Activated CD4-positive, alpha-beta T cell treated with anti-CD3 and anti-CD28 coated beads for 36 hours (primary cell): ENCODE measurements at regions of chr18 and their contacts with region 1.

Region 1: DNA sequence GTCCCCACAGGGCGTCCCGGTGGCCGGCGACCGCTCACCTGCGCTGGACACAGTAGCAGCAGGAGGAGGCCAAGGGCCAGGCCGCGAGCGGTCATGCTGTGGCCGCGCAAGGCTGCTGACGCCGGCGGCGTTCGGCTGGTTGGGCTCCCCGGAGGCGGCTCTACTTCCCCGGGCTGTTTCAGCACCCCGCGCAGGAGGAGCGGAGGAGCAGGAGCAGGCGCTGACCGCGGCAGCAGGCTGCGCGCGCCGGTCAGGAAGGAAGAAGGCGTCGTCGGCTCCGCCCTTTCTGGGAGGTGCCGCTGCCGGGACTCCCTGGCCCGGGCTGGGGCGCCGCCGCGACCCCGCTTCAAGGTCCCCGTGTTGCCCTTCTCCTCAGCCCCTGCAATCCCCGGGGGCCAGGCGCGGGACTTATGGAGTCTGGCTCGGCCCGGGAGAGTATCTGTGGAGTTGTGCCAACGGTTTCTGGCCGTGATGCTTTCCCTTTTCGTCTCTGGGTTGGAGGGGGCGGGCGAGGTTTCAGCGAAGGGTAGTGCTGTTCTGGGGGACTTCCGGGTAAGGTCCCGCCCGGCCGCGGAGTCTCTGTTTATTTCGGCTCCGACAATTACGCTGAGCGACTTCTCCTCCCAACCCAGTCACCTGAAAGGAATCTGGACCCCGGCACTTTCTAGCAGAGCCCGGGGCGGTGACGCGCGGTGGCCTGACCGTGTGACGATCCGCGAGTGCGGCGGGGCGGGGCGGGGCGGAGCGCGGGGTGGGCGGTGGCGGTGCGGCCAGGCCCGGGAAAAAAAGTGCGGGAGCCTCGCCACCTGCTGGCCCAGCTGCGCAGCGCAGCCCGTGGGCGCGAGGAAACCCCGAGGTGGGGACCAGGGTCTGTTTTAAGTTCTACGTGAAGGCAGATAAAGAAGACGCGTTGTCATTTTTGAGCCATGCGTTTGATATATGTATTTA is at the start of gene NPC1:
- DNase-seq: peak; percentile 95
- ATAC-seq: peak; percentile 95
- H3K4me3 Mint-ChIP-seq: peak within 1 kb of the TSS; percentile 94
- H3K27ac Mint-ChIP-seq: peak within 1 kb of the TSS; percentile 91
- H3K4me1 Mint-ChIP-seq: peaks cover 39% of the 10 kb centered on the region
- H3K27me3 Mint-ChIP-seq: no peaks in the 10 kb centered on the region
- total RNA-seq, gene NPC1: 21.6 to 29.2 TPM

Region 2: DNA sequence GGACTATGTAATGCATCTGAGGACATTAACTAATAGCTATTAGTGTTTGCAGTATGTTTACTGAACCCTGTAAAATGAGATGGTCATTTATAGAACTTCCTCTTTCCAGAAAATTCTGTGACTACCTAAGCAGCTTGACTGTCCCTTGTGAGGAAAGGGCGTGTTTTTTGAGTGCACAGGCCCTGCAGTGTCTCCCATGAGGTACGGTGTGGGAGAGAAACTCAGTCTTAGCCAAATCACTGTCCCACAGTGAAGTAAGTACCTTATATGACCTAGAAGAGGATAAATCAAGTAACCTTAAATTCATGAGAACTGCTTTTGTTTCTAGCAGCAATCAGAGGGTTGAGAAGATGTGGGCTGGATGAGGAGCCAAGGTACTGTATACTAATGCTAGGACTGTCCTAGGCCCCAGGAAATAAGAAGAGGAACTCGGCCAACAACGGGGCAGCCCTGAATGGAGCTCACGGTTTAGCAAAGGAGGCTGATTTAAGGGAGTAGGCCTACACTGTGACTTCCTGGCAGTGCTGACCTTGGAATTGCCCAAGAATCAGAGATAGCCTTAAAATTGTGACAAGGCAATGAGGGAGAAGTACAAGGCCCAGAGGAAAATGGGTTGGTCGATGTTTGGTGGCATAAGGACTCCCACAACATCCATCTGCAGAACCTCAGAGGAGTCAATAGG is 1065.4 kb before region 1 on chr18:
- CTCF ChIA-PET with region 1: no interaction called
- POLR2A ChIA-PET with region 1: no interaction called
- intact Hi-C with region 1: no loop called
- DNase-seq: no peak
- ATAC-seq: no peak
- H3K4me3 Mint-ChIP-seq: no peak overlapping the region
- H3K27ac Mint-ChIP-seq: no peak overlapping the region
- H3K4me1 Mint-ChIP-seq: no peaks in the 10 kb centered on the region
- H3K27me3 Mint-ChIP-seq: no peaks in the 10 kb centered on the region

Region 3: GRCh38 chr18:23071285-23071684 is 515.2 kb before region 1 on chr18:
- CTCF ChIA-PET with region 1: no interaction called
- POLR2A ChIA-PET with region 1: no interaction called
- intact Hi-C with region 1: no loop called
- DNase-seq: peak; percentile 84
- ATAC-seq: peak; percentile 96
- H3K4me3 Mint-ChIP-seq: peak overlapping the region; percentile 34
- H3K27ac Mint-ChIP-seq: peak overlapping the region; percentile 86
- H3K4me1 Mint-ChIP-seq: peaks cover 55% of the 10 kb centered on the region
- H3K27me3 Mint-ChIP-seq: no peaks in the 10 kb centered on the region

Region 4: DNA sequence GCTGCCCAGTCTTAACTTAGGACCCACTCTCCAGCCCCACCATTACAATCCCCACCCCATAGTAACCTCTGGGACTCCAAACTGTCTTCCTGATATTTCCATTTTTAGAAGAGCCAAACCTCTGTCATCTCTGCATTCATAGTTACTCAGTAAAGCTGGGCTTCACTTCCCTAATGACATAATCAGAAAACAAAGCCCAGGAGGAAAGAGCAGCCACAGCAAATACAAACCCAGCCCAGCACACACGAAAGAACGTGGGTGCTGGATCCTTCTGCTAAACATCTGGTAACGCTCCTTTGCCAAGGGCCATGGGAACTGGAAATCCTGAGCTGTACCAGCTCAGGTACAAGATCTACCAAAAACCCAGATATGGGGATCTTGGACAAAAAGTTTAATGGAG is 170.2 kb before region 1 on chr18:
- CTCF ChIA-PET with region 1: no interaction called
- POLR2A ChIA-PET with region 1: no interaction called
- intact Hi-C with region 1: no loop called
- DNase-seq: no peak
- ATAC-seq: no peak
- H3K4me3 Mint-ChIP-seq: no peak overlapping the region
- H3K27ac Mint-ChIP-seq: no peak overlapping the region
- H3K4me1 Mint-ChIP-seq: no peaks in the 10 kb centered on the region
- H3K27me3 Mint-ChIP-seq: no peaks in the 10 kb centered on the region

Region 5: DNA sequence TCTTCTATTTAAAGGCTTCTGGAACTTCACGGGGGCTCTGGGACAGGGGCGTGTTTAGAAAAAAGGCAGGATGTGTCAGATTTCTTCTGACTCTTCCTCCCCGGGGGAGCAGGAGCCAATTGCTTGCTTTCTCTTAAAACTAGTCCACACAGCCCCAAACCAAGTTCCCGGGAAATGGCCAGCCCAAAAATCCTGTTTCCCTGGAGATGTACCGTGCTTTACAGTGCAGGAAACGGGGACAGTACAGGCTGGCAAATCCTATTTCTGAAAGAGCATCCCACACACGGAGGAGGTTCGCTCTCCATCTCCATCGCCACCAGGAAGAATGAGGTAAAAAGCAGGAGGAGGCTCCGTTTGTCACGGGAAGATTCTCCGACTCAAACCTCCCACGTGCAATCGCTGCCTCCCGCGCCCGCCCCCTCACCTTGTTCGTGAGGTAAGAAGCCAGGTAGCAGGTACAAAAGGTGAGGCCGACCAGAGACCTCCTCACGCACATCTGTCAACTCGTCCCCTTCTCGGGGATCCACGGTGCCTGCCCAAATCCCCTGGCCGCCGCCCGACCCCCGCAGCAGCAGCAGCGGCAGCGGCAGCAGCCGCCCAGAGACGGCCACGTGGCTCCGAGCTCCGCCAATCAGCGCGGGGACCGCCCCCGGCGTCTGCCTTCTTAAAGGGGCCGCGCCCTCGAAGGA is 149.0 kb before region 1 on chr18:
- CTCF ChIA-PET with region 1: no interaction called
- POLR2A ChIA-PET with region 1: no interaction called
- intact Hi-C with region 1: loop called in 1 of 2 experiments (anchors 1 kb)
- DNase-seq: peak; percentile 91
- ATAC-seq: peak; percentile 100
- H3K4me3 Mint-ChIP-seq: peak overlapping the region; percentile 93
- H3K27ac Mint-ChIP-seq: peak overlapping the region; percentile 89
- H3K4me1 Mint-ChIP-seq: peaks cover 17% of the 10 kb centered on the region
- H3K27me3 Mint-ChIP-seq: no peaks in the 10 kb centered on the region

Region 6: GRCh38 chr18:23515911-23516546 is 70.5 kb before region 1 on chr18:
- CTCF ChIA-PET with region 1: interaction called, 11 read pairs
- POLR2A ChIA-PET with region 1: no interaction called
- intact Hi-C with region 1: loop called (anchors 1 kb)
- DNase-seq: peak; percentile 86
- ATAC-seq: peak; percentile 98
- H3K4me3 Mint-ChIP-seq: no peak overlapping the region
- H3K27ac Mint-ChIP-seq: peak overlapping the region; percentile 60
- H3K4me1 Mint-ChIP-seq: peaks cover 9% of the 10 kb centered on the region
- H3K27me3 Mint-ChIP-seq: no peaks in the 10 kb centered on the region

Region 7: DNA sequence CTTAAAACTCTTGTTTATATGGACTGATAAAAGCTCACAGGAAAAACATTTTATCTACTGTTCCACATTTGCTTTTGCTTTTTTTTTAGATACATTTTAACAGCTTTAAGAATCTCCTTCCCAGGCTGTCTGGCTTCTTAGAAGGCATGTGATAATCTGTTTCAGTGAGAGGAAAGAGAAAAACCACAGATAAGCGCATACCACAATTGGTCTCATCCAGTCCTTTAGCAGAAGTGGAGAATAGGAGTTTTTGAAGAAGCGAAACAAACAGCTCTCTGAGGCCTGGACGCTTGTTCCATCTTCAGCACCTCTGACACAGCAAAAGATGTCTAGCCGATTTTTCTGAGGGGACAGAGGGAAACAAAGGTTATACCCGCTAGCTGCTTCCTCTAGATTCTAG is 45.7 kb before region 1 on chr18:
- CTCF ChIA-PET with region 1: no interaction called
- POLR2A ChIA-PET with region 1: no interaction called
- intact Hi-C with region 1: loop called in 1 of 2 experiments (anchors 2 kb)
- DNase-seq: peak; percentile 10
- ATAC-seq: peak; percentile 74
- H3K4me3 Mint-ChIP-seq: peak overlapping the region; percentile 15
- H3K27ac Mint-ChIP-seq: peak overlapping the region; percentile 82
- H3K4me1 Mint-ChIP-seq: peaks cover 31% of the 10 kb centered on the region
- H3K27me3 Mint-ChIP-seq: no peaks in the 10 kb centered on the region